Activated B cell treated with CpG ODN at 0.5 μM for 24 hours (primary cell): ENCODE measurements at regions of chr6 and their contacts with region 1.

Region 1: GRCh38 chr6:27753668-27754407 is 158.4 kb downstream of the OR2B2 start:
- DNase-seq: peak; percentile 53
- ATAC-seq: peak; percentile 59
- H3K4me3 Mint-ChIP-seq: peak overlapping the region; percentile 96
- H3K27ac Mint-ChIP-seq: peak overlapping the region; percentile 97
- H3K4me1 Mint-ChIP-seq: peaks cover 32% of the 10 kb centered on the region
- H3K27me3 Mint-ChIP-seq: no peaks in the 10 kb centered on the region
- CTCF ChIP-seq: no peak

Region 2: DNA sequence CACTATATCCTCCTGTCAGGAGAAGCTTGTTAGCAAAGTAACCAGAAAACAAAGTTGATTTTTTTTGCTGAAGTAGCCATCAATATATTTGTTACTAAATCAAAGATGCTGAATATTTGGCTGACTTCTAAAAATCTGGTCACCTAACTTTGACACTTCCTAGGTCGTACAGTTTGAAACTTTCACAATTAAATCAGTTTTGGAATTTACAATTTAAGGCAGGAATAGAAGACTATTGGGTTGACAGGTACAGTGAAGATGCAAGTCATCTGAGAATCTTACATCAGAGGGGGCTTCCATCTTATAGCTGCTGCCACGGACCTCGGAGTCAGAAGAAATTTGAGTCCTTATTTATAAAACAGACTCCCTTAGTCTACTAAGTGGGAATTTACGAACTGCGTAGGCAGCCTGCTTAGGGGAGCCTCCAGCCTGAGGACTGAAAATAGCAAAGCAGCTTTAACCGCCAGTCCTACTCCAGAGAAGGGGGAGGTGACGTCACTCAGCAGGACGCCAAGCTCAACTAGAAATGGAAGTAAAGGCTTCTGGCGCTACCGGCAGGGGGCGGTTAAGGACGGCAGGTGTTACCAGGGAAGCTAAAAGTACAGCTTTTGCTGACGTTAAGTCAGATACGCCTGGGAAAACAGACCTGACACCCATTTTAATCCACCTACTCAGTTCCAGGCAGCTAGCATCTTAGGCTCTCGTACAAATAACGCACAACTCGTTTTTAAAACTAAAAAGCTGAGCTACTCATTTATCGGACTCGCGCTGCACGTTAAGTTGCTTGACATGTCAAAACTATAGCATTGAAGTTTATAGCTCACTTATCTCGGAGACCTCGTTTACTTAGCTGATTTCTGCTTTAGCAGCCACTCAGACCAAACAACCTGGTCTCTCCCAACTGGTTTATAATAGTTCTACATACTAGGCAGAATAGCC is 1727.7 kb before region 1 on chr6:
- CTCF ChIA-PET with region 1: no interaction called
- POLR2A ChIA-PET with region 1: no interaction called
- intact Hi-C with region 1: loop called (anchors 5 kb)
- DNase-seq: peak; percentile 76
- ATAC-seq: peak; percentile 39
- H3K4me3 Mint-ChIP-seq: peak overlapping the region; percentile 96
- H3K27ac Mint-ChIP-seq: peak overlapping the region; percentile 99
- H3K4me1 Mint-ChIP-seq: peaks cover 35% of the 10 kb centered on the region
- H3K27me3 Mint-ChIP-seq: peaks cover 2% of the 10 kb centered on the region
- CTCF ChIP-seq: no peak

Region 3: DNA sequence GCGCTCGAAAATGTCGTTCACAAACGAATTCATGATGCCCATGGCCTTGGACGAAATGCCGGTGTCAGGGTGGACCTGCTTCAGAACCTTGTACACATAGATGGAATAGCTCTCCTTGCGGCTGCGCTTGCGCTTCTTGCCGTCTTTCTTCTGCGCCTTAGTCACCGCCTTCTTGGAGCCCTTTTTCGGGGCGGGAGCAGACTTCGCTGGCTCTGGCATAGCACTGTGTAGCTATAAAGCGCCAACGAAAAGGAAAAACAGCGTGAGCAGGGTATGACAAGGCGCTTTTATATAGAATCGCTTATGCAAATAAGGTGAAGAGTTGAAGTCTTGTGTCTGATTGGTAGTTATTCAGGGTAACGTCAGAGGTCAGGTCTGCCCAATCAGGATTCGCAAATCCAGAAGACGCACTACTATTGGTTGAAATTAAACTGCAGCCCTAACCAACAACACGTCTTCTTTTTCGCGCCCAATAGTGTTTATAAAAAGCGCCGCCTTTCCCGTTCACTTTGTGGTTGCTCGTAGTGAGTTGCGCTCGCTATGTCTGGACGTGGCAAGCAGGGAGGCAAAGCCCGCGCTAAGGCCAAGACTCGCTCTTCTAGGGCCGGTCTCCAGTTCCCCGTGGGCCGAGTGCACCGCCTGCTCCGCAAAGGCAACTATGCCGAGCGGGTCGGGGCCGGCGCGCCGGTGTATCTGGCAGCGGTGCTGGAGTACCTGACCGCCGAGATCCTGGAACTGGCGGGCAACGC is 621.1 kb before region 1 on chr6:
- CTCF ChIA-PET with region 1: no interaction called
- POLR2A ChIA-PET with region 1: interaction called, 4 read pairs
- intact Hi-C with region 1: loop called (anchors 1 kb)
- DNase-seq: peak; percentile 77
- ATAC-seq: peak; percentile 84
- H3K4me3 Mint-ChIP-seq: no peak overlapping the region
- H3K27ac Mint-ChIP-seq: no peak overlapping the region
- H3K4me1 Mint-ChIP-seq: peaks cover 14% of the 10 kb centered on the region
- H3K27me3 Mint-ChIP-seq: no peaks in the 10 kb centered on the region
- CTCF ChIP-seq: no peak

Region 4: DNA sequence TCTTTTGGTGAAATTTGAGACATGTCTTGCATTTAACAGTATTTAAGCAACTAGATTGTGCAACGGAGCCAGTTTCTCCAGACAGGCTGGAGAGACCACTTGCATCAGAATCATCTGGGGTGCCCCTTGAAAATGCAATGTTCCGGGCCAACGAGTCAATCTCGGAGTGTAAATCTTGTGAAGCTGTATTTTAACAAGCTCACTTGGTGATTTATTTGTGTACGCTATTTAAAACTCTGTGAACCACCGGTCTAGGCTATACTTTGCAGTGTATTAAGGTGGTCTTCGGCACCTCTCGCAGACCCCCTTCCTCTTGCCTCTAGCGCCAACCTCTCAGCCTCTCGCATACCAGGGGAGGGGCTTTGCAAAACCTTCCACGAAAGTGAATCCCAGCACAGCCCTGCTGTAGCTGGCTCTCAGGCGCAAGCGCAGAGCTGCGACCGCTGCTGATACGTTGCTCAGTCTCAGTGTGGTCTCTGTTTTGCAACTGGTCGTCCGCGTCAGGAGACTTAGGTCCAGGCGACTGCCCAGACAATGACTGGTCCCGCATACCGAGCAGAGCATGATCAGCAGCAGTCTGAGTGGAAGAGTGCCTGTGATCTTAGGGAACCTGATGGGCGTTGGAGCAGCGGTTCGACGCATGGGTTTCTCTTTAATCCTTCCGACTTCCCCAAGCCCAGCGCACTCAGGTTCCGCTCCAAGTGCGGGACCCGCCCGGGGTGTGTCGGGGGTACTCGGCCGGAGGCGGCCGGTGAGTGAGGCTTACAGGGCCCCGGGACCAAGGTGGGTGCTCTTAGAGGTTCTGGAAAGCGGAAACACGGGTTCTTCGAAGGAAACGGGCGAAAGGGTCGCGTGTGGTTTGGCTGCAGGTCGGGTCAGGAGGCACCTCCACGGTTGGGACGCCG is 365.3 kb before region 1 on chr6 and contains the start of gene ZNF391:
- CTCF ChIA-PET with region 1: interaction called, 4 read pairs
- POLR2A ChIA-PET with region 1: no interaction called
- intact Hi-C with region 1: loop called (anchors 5 kb)
- DNase-seq: peak; percentile 73
- ATAC-seq: peak; percentile 88
- H3K4me3 Mint-ChIP-seq: peak within 1 kb of the TSS; percentile 97
- H3K27ac Mint-ChIP-seq: peak within 1 kb of the TSS; percentile 95
- H3K4me1 Mint-ChIP-seq: peaks cover 13% of the 10 kb centered on the region
- H3K27me3 Mint-ChIP-seq: no peaks in the 10 kb centered on the region
- CTCF ChIP-seq: no peak
- total RNA-seq, gene ZNF391: 4.8 and 5.9 TPM in 2 replicates

Region 5: DNA sequence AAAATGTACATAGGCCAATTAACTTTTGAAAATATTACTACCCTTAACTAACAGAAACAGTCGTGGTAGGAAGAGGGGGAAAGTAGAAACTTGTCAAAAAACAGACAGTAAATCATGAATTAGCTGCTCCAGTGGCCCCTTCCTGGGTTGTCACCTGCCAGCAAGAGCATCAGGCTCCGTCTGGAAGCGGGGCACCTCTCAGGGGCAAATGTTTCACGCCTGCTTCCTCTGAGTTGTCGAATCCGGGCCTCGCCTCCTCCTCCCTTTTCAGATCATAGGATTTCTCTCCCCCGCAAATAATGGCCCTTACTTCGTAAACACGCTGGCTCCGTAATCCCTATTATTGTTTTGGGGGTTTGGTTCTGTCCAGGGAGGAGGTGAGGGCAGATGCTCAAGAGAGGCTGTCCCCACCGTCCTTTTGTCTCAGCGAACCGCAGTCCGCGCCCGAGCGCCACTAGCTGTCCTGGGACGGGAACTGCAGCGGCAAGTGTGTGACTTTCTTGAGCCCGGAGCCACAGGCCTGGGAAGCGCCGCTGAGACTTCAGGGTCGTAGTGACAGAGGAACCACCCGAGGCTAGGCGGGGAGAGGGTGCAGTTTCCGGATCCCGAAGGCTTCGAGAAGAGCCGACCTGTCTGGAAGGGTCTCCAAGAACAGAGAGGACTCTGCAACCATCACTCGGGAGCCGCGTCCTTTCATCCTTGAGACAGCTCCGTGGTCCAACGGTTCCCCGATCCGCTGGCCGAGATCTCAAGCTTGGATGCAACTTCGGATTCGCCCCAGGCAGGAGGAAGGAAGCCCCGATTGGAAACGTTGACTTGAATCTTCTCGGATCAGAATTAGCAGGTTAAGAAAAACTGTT is 66.5 kb before region 1 on chr6:
- CTCF ChIA-PET with region 1: interaction called, 9 read pairs
- POLR2A ChIA-PET with region 1: interaction called, 15 read pairs
- intact Hi-C with region 1: loop called (anchors 1 kb)
- DNase-seq: peak; percentile 63
- ATAC-seq: peak; percentile 73
- H3K4me3 Mint-ChIP-seq: peak overlapping the region; percentile 93
- H3K27ac Mint-ChIP-seq: peak overlapping the region; percentile 90
- H3K4me1 Mint-ChIP-seq: peaks cover 16% of the 10 kb centered on the region
- H3K27me3 Mint-ChIP-seq: peaks cover 4% of the 10 kb centered on the region
- CTCF ChIP-seq: no peak

Region 6: GRCh38 chr6:27902335-27903314 is 148.8 kb after region 1 on chr6:
- CTCF ChIA-PET with region 1: interaction called, 4 read pairs
- POLR2A ChIA-PET with region 1: no interaction called
- intact Hi-C with region 1: loop called (anchors 1 kb)
- DNase-seq: peak; percentile 75
- ATAC-seq: peak; percentile 83
- H3K4me3 Mint-ChIP-seq: peak overlapping the region; percentile 89
- H3K27ac Mint-ChIP-seq: peak overlapping the region; percentile 96
- H3K4me1 Mint-ChIP-seq: peaks cover 10% of the 10 kb centered on the region
- H3K27me3 Mint-ChIP-seq: peaks cover 3% of the 10 kb centered on the region
- CTCF ChIP-seq: no peak

Region 7: DNA sequence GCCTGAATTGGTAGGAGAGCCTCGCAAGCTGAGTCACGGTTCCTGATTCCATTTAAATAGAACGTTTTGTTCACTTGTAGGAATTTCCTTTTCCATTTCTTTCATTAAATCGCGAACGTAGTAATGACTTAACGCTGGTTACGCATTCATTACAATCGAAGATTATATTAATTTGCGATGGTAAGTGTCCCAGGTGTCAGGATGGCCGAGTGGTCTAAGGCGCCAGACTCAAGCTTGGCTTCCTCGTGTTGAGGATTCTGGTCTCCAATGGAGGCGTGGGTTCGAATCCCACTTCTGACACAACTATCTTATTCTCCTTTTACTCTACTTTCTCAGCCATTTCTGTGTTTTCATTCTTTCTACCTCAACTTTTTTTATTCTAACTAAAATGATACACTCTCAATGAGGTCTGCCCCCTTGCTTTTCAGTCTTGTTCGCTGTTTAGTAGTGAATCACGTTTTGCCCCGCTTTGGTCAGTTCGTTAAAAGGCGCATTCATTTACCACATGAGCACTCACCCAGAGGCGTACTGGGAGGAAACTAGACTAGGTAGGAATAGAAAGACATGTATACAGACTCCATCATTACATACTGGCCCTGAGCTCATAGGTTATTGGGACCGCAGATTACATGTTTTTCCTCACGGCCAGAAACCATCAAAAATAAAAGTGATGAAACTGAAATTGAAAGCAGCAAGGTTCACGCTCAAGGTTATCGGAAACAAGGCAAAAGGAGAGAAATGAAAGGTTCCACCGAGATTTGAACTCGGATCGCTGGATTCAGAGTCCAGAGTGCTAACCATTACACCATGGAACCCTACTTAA is 1187.2 kb after region 1 on chr6:
- CTCF ChIA-PET with region 1: no interaction called
- POLR2A ChIA-PET with region 1: no interaction called
- intact Hi-C with region 1: loop called (anchors 5 kb)
- DNase-seq: peak; percentile 36
- ATAC-seq: peak; percentile 66
- H3K4me3 Mint-ChIP-seq: peak overlapping the region; percentile 95
- H3K27ac Mint-ChIP-seq: peak overlapping the region; percentile 88
- H3K4me1 Mint-ChIP-seq: peaks cover 47% of the 10 kb centered on the region
- H3K27me3 Mint-ChIP-seq: peaks cover 3% of the 10 kb centered on the region
- CTCF ChIP-seq: no peak